Caco-2 (cell line): ENCODE measurements at regions of chr19 and their contacts with region 1.

Region 1: DNA sequence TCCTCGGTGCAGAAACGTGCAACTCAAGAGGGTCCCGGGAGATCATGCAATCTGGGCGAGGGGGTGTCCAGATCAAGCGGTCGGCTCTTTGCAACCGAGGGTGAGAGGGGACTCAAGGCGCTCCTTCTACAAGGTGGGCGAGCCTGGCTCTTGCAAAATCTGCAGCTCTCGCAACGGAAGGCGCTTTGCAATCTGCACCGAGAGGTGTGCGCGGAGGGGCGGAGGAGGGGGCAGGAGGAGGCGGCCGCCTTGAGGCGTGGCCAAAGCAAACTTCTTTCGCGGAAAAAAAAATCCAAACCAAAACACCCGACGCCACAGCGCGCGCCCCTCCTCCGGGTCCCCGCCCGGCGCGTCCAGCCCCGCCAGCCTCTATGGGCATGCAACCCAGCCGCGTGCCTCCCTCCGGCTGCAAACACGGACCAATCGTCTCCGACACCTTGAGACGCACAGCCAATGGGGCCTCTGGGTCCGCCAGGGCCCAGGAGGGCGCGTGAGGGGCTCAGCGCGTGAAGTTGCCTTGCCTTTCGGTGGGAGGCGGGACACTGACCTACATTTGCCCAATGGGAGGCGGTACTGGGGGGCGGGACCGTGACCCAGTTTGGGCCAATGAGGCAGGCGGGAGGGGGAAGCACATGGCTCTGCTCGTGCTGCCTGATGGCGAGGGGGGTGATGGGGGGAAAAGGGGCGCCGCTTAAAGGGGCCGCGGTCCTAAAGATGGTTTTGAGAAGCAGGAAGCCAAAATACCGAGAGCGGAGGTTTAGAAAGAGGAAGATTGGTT is at the start of gene DBP:
- DNase-seq: peak; percentile 100
- H3K4me3 ChIP-seq: peak within 1 kb of the TSS; percentile 63
- H3K4me3 Mint-ChIP-seq: peak within 1 kb of the TSS; percentile 80
- H3K27ac Mint-ChIP-seq: peak within 1 kb of the TSS; percentile 96
- H3K4me1 ChIP-seq: peaks cover 33% of the 10 kb centered on the region
- H3K4me1 Mint-ChIP-seq: peaks cover 36% of the 10 kb centered on the region
- H3K27me3 ChIP-seq: no peaks in the 10 kb centered on the region
- H3K27me3 Mint-ChIP-seq: no peaks in the 10 kb centered on the region
- CTCF ChIP-seq: no peak
- total RNA-seq, gene DBP: 17.4 and 17.7 TPM in 2 replicates

Region 2: GRCh38 chr19:48501496-48502350 is 135.6 kb before region 1 on chr19:
- CTCF ChIA-PET with region 1: interaction called, 5 read pairs
- POLR2A ChIA-PET with region 1: no interaction called
- intact Hi-C with region 1: loop called (anchors 2 kb)
- DNase-seq: peak; percentile 99 to 100
- H3K4me3 ChIP-seq: peak overlapping the region; percentile 57
- H3K4me3 Mint-ChIP-seq: peak overlapping the region; percentile 80
- H3K27ac Mint-ChIP-seq: peak overlapping the region; percentile 87
- H3K4me1 ChIP-seq: peaks cover 15% of the 10 kb centered on the region
- H3K4me1 Mint-ChIP-seq: peaks cover 22% of the 10 kb centered on the region
- H3K27me3 ChIP-seq: no peaks in the 10 kb centered on the region
- H3K27me3 Mint-ChIP-seq: no peaks in the 10 kb centered on the region
- CTCF ChIP-seq: no peak

Region 3: GRCh38 chr19:48578891-48579290 is 58.5 kb before region 1 on chr19:
- CTCF ChIA-PET with region 1: no interaction called
- POLR2A ChIA-PET with region 1: no interaction called
- intact Hi-C with region 1: no loop called
- DNase-seq: no peak
- H3K4me3 ChIP-seq: no peak overlapping the region
- H3K4me3 Mint-ChIP-seq: no peak overlapping the region
- H3K27ac Mint-ChIP-seq: no peak overlapping the region
- H3K4me1 ChIP-seq: peaks cover 10% of the 10 kb centered on the region
- H3K4me1 Mint-ChIP-seq: peaks cover 1% of the 10 kb centered on the region
- H3K27me3 ChIP-seq: no peaks in the 10 kb centered on the region
- H3K27me3 Mint-ChIP-seq: no peaks in the 10 kb centered on the region
- CTCF ChIP-seq: no peak

Region 4: GRCh38 chr19:48618916-48619691 is 18.3 kb before region 1 on chr19 and contains the starts of genes RPL18 and SPHK2:
- CTCF ChIA-PET with region 1: interaction called, 4 read pairs
- POLR2A ChIA-PET with region 1: interaction called, 37 read pairs
- intact Hi-C with region 1: loop called (anchors 1 kb)
- DNase-seq: peak; percentile 99
- H3K4me3 ChIP-seq: peak within 1 kb of the TSS; percentile 85
- H3K4me3 Mint-ChIP-seq: peak within 1 kb of the TSS; percentile 96
- H3K27ac Mint-ChIP-seq: peak within 1 kb of the TSS; percentile 98
- H3K4me1 ChIP-seq: peaks cover 39% of the 10 kb centered on the region
- H3K4me1 Mint-ChIP-seq: peaks cover 36% of the 10 kb centered on the region
- H3K27me3 ChIP-seq: no peaks in the 10 kb centered on the region
- H3K27me3 Mint-ChIP-seq: no peaks in the 10 kb centered on the region
- CTCF ChIP-seq: no peak
- total RNA-seq, gene RPL18: 1,812 and 1,896 TPM in 2 replicates
- total RNA-seq, gene SPHK2: 134 and 140 TPM in 2 replicates

Region 5: GRCh38 chr19:48624067-48624594 is 13.2 kb before region 1 on chr19:
- CTCF ChIA-PET with region 1: interaction called, 4 read pairs
- POLR2A ChIA-PET with region 1: interaction called, 37 read pairs
- intact Hi-C with region 1: loop called (anchors 1 kb)
- DNase-seq: peak; percentile 99
- H3K4me3 ChIP-seq: peak overlapping the region; percentile 63
- H3K4me3 Mint-ChIP-seq: peak overlapping the region; percentile 87
- H3K27ac Mint-ChIP-seq: peak overlapping the region; percentile 87
- H3K4me1 ChIP-seq: peaks cover 50% of the 10 kb centered on the region
- H3K4me1 Mint-ChIP-seq: peaks cover 48% of the 10 kb centered on the region
- H3K27me3 ChIP-seq: no peaks in the 10 kb centered on the region
- H3K27me3 Mint-ChIP-seq: no peaks in the 10 kb centered on the region
- CTCF ChIP-seq: no peak

Region 6: DNA sequence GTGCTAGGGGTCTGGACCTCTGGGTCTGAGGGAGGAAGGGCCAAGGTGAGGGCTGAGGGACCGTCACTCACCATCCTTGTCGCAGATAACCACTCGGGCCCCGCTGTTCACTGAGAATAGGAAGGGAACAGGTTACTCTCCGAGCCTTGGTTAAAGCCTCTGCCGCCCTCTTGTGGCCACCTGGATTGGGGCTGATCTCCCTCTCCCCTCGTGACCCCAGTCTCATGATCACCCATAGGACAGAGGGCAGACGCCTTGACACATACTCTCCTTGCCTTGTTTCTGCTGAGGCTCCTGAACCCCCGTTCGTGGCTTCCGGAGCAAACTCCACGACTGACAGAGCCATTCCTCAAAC is 198.4 kb after region 1 on chr19:
- CTCF ChIA-PET with region 1: no interaction called
- POLR2A ChIA-PET with region 1: no interaction called
- intact Hi-C with region 1: loop called (anchors 5 kb)
- DNase-seq: peak; percentile 97
- H3K4me3 ChIP-seq: peak overlapping the region; percentile 63
- H3K4me3 Mint-ChIP-seq: peak overlapping the region; percentile 92
- H3K27ac Mint-ChIP-seq: peak overlapping the region; percentile 90
- H3K4me1 ChIP-seq: peaks cover 4% of the 10 kb centered on the region
- H3K4me1 Mint-ChIP-seq: no peaks in the 10 kb centered on the region
- H3K27me3 ChIP-seq: no peaks in the 10 kb centered on the region
- H3K27me3 Mint-ChIP-seq: no peaks in the 10 kb centered on the region
- CTCF ChIP-seq: peak; percentile 93 to 97

Region 7: DNA sequence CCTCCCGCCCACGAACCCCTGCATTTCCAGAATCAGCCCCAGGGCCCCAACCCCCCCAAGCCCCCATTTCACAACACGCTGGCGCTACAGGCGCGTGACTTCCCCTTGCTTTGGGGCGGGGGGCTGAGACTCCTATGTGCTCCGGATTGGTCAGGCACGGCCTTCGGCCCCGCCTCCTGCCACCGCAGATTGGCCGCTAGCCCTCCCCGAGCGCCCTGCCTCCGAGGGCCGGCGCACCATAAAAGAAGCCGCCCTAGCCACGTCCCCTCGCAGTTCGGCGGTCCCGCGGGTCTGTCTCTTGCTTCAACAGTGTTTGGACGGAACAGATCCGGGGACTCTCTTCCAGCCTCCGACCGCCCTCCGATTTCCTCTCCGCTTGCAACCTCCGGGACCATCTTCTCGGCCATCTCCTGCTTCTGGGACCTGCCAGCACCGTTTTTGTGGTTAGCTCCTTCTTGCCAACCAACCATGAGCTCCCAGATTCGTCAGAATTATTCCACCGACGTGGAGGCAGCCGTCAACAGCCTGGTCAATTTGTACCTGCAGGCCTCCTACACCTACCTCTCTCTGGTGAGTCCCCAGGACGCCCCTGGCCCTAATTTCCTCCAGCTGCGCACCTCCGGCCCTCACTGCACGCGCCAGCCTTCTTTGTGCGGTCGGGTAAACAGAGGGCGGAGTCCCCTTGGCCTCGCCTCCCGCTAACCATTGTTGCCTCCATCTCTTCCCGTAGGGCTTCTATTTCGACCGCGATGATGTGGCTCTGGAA is 327.9 kb after region 1 on chr19 and contains the start of gene FTL:
- CTCF ChIA-PET with region 1: no interaction called
- POLR2A ChIA-PET with region 1: no interaction called
- intact Hi-C with region 1: loop called (anchors 5 kb)
- DNase-seq: peak; percentile 99
- H3K4me3 ChIP-seq: peak within 1 kb of the TSS; percentile 95
- H3K4me3 Mint-ChIP-seq: peak within 1 kb of the TSS; percentile 96
- H3K27ac Mint-ChIP-seq: peak within 1 kb of the TSS; percentile 96
- H3K4me1 ChIP-seq: peaks cover 31% of the 10 kb centered on the region
- H3K4me1 Mint-ChIP-seq: peaks cover 40% of the 10 kb centered on the region
- H3K27me3 ChIP-seq: no peaks in the 10 kb centered on the region
- H3K27me3 Mint-ChIP-seq: no peaks in the 10 kb centered on the region
- CTCF ChIP-seq: no peak
- total RNA-seq, gene FTL: 2,542 and 2,963 TPM in 2 replicates